G401 (cell line): ENCODE measurements at regions of chr17 and their contacts with region 1.

Region 1: DNA sequence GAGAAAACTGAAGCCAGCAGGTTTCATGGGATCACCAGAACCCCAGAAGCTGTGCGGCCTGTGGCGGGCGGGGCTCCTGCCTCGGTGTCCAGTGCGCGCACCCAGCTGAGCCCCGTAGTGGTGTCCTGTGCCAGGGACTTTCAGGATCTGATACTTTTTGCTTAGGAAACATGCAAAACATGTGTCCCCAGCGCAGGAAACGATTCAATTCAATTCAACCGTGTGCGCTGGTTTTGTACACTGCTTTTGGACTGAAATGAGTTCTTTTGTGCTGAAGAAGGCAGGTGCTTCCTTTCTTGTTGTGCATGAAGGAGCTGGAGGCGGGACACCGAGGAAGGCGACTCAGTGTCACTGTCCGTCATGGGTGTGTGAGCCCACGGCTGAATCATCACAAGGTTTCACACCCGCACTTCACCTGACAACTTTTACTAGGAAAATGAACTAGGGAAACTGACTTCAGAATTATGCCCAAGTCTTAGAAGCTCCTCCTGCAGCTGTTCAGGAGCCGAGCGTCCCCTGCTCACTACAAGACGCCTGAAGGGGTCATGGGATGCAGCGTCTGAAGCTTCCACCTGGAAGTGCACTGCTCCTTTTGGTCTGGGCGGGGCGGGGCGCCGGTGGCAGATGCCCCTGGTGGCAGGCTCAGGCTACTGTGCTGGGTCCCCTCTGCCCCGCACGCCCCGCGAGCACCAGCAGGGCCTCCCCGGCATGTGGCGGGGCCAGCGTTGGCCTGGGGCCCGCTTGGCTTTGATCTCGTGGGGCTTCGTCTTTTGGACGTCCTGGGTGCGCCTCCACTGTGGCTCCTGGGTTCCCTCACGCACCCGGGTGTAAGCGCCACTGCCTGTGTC is 31.5 kb upstream of the ZNF750 start:
- DNase-seq: no peak

Region 2: GRCh38 chr17:82836823-82837357 is 34.4 kb before region 1 on chr17:
- in situ Hi-C with region 1: loop called (anchors 5 kb)
- DNase-seq: no peak

Region 3: GRCh38 chr17:82932518-82933310 is 61.4 kb after region 1 on chr17:
- in situ Hi-C with region 1: no loop called
- DNase-seq: no peak